CD4-positive, alpha-beta memory T cell (primary cell): ENCODE measurements at regions of chr1 and their contacts with region 1.

Region 1: GRCh38 chr1:65235867-65236805 is 73.2 kb upstream of the DNAJC6 start:
- DNase-seq: peak in 4 of 5 donors; percentile 23 to 37 (median 24)
- H3K4me3 ChIP-seq: no peak overlapping the region
- H3K4me3 Mint-ChIP-seq: no peak overlapping the region
- H3K27ac ChIP-seq: no peak overlapping the region
- H3K27ac Mint-ChIP-seq: no peak overlapping the region
- H3K4me1 ChIP-seq: no peaks in the 10 kb centered on the region
- H3K4me1 Mint-ChIP-seq: no peaks in the 10 kb centered on the region
- H3K27me3 ChIP-seq: no peaks in the 10 kb centered on the region
- H3K27me3 Mint-ChIP-seq: peaks cover 8 to 11% of the 10 kb centered on the region in 2 donors

Region 2: GRCh38 chr1:65247513-65248359 is 11.6 kb after region 1 on chr1:
- CTCF ChIA-PET with region 1: interaction called, 11 read pairs
- POLR2A ChIA-PET with region 1: no interaction called
- intact Hi-C with region 1: no loop called
- DNase-seq: no peak
- H3K4me3 ChIP-seq: no peak overlapping the region
- H3K4me3 Mint-ChIP-seq: no peak overlapping the region
- H3K27ac ChIP-seq: no peak overlapping the region
- H3K27ac Mint-ChIP-seq: no peak overlapping the region
- H3K4me1 ChIP-seq: no peaks in the 10 kb centered on the region
- H3K4me1 Mint-ChIP-seq: no peaks in the 10 kb centered on the region
- H3K27me3 ChIP-seq: no peaks in the 10 kb centered on the region
- H3K27me3 Mint-ChIP-seq: peaks cover 13 to 16% of the 10 kb centered on the region in 2 donors